PC-3 (cell line): ENCODE measurements at regions of chr3 and their contacts with region 1.

Region 1: DNA sequence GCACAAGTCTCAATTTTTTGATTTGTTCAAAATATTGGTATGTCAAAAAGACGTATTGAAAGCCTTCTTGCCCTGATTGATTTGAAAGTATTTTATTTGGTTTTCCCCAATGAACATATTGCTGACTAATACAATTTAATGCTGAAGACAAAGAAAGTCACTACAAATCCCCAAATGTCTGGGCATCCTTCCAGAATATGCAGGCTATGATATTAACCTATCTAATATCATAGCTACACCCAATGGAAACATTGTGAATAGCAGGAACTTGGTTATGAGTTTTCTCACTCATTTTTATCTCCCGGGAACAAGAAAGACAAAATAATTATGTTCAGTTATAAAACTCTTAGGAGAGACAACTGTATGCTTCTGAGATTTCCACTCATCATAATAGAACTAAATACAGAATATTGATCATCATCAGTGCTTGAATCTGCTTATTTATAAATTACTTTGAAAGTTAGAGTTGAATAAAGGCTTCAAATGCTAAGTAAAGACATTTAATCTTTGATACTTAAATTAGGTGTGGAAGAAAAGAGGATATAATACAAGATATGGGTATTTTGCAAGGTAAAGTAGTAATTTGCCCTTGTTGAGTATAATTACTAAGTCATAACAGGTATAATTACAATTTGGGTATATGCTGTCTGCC is 483.9 kb downstream of the RBMS3 start:
- DNase-seq: peak; percentile 94
- ATAC-seq: peak; percentile 70
- H3K4me3 ChIP-seq: no peak overlapping the region
- H3K27ac ChIP-seq: no peak overlapping the region
- H3K4me1 ChIP-seq: peaks cover 9% of the 10 kb centered on the region; the same call in 1 of the 2 replicates
- H3K27me3 ChIP-seq: no peaks in the 10 kb centered on the region
- CTCF ChIP-seq: peak; percentile 93

Region 2: GRCh38 chr3:28667646-28668621 is 1096.8 kb before region 1 on chr3:
- CTCF ChIA-PET with region 1: no interaction called
- POLR2A ChIA-PET with region 1: no interaction called
- intact Hi-C with region 1: loop called (anchors 5 kb)
- DNase-seq: peak; percentile 83
- ATAC-seq: peak; percentile 98
- H3K4me3 ChIP-seq: no peak overlapping the region
- H3K27ac ChIP-seq: no peak overlapping the region
- H3K4me1 ChIP-seq: no peaks in the 10 kb centered on the region
- H3K27me3 ChIP-seq: peaks cover 48% of the 10 kb centered on the region
- CTCF ChIP-seq: peak; percentile 93

Region 3: GRCh38 chr3:28916713-28917499 is 847.8 kb before region 1 on chr3:
- CTCF ChIA-PET with region 1: no interaction called
- POLR2A ChIA-PET with region 1: no interaction called
- intact Hi-C with region 1: loop called (anchors 1 kb)
- DNase-seq: peak; percentile 47
- ATAC-seq: peak; percentile 75
- H3K4me3 ChIP-seq: no peak overlapping the region
- H3K27ac ChIP-seq: no peak overlapping the region
- H3K4me1 ChIP-seq: 0 out of 2 replicates have a peak, but pooled peaks cover 4% of the 10 kb centered on the region
- H3K27me3 ChIP-seq: no peaks in the 10 kb centered on the region
- CTCF ChIP-seq: peak; percentile 29; the same call in 1 of the 2 replicates

Region 4: GRCh38 chr3:29186982-29187725 is 577.6 kb before region 1 on chr3:
- CTCF ChIA-PET with region 1: no interaction called
- POLR2A ChIA-PET with region 1: no interaction called
- intact Hi-C with region 1: loop called (anchors 1 kb)
- DNase-seq: peak; percentile 99
- ATAC-seq: peak; percentile 79
- H3K4me3 ChIP-seq: no peak overlapping the region; the same call in 1 of the 2 replicates
- H3K27ac ChIP-seq: peak overlapping the region; percentile 98
- H3K4me1 ChIP-seq: peaks cover 45% of the 10 kb centered on the region
- H3K27me3 ChIP-seq: no peaks in the 10 kb centered on the region
- CTCF ChIP-seq: no peak

Region 5: DNA sequence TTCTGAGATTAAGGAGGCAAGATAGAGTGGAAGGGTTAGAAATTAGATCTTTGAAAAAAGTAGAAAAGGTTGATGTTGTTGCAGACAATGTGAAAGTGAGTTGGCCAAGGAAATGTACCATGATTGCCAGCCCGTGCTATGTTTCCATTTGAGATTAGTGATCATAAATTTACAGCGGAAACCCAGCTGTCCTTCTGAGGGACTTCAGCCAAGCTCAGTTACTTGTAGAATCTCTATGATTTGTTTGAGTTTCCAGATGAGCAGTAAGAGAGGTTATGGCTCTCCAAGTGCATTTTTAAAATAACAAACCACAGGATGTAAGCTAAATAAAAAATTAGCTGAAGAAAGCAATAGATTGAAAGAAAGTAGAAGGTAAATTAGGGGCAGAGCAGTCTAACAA is 538.0 kb before region 1 on chr3:
- CTCF ChIA-PET with region 1: no interaction called
- POLR2A ChIA-PET with region 1: no interaction called
- intact Hi-C with region 1: no loop called
- DNase-seq: no peak
- ATAC-seq: no peak
- H3K4me3 ChIP-seq: no peak overlapping the region
- H3K27ac ChIP-seq: no peak overlapping the region
- H3K4me1 ChIP-seq: no peaks in the 10 kb centered on the region
- H3K27me3 ChIP-seq: no peaks in the 10 kb centered on the region
- CTCF ChIP-seq: no peak

Region 6: DNA sequence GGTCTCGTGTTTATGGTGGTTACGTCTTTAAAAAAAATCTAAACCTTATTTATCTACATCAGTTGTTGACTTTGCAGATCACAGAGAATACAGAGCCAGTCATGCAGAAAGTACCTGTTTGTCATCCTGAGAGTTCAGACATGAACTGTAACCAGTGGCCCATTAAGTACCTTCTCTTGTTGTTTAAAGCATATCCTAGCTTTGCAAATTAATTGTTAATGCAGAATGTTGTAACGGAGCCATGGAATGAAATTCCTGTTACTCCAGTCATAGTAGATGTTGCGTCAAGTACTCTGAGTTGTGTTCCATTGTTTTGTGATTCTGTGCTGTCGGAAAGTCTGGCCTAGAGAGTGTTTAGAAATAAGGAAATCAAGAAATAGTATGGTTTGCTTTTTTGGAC is 278.6 kb before region 1 on chr3:
- CTCF ChIA-PET with region 1: no interaction called
- POLR2A ChIA-PET with region 1: no interaction called
- intact Hi-C with region 1: loop called (anchors 2 kb)
- DNase-seq: peak; percentile 88
- ATAC-seq: peak; percentile 93
- H3K4me3 ChIP-seq: peak overlapping the region; percentile 34; the same call in 1 of the 2 replicates
- H3K27ac ChIP-seq: peak overlapping the region; percentile 92
- H3K4me1 ChIP-seq: peaks cover 33% of the 10 kb centered on the region
- H3K27me3 ChIP-seq: no peaks in the 10 kb centered on the region
- CTCF ChIP-seq: no peak

Region 7: DNA sequence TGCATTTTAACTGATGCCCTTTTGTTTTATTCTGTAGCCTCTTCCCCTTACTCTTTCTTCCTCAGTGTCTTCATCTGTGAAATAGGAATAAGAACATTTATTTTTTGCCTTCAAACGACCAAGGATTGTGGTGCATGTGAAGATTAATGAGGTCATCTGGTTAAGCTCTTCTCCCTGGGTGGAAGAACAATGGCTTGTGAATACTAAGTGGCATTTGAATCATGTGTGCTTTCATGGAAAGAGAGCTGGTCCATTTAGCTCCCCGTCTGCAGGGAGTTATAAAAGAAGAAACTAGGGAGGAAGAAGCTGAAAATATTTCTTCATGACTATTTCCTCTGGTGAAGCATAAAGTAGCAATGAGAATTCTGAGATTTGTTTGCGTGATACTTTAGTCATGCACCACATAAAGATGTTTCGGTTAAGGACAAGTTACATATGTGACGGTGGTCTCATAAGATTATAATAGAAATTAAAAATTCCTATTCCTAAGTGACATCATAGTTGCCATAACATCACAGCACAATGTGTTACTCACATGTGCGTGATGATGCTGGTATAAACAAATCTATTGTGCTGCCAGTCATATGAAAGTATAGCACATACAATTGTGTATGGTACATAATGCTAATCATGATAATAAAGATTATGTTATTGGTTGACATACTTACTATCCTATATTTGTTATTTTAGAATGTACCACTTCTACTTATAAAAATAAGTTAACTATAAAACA is 109.5 kb before region 1 on chr3:
- CTCF ChIA-PET with region 1: no interaction called
- POLR2A ChIA-PET with region 1: no interaction called
- intact Hi-C with region 1: no loop called
- DNase-seq: no peak
- ATAC-seq: no peak
- H3K4me3 ChIP-seq: no peak overlapping the region
- H3K27ac ChIP-seq: no peak overlapping the region
- H3K4me1 ChIP-seq: 0 out of 2 replicates have a peak, but pooled peaks cover 1% of the 10 kb centered on the region
- H3K27me3 ChIP-seq: no peaks in the 10 kb centered on the region
- CTCF ChIP-seq: no peak

Region 8: GRCh38 chr3:29693863-29694262 is 70.9 kb before region 1 on chr3:
- CTCF ChIA-PET with region 1: no interaction called
- POLR2A ChIA-PET with region 1: no interaction called
- intact Hi-C with region 1: loop called (anchors 2 kb)
- DNase-seq: peak; percentile 91
- ATAC-seq: peak; percentile 77
- H3K4me3 ChIP-seq: peak overlapping the region; percentile 13; the same call in 1 of the 2 replicates
- H3K27ac ChIP-seq: peak overlapping the region; percentile 53
- H3K4me1 ChIP-seq: peaks cover 38% of the 10 kb centered on the region
- H3K27me3 ChIP-seq: no peaks in the 10 kb centered on the region
- CTCF ChIP-seq: no peak

Region 9: DNA sequence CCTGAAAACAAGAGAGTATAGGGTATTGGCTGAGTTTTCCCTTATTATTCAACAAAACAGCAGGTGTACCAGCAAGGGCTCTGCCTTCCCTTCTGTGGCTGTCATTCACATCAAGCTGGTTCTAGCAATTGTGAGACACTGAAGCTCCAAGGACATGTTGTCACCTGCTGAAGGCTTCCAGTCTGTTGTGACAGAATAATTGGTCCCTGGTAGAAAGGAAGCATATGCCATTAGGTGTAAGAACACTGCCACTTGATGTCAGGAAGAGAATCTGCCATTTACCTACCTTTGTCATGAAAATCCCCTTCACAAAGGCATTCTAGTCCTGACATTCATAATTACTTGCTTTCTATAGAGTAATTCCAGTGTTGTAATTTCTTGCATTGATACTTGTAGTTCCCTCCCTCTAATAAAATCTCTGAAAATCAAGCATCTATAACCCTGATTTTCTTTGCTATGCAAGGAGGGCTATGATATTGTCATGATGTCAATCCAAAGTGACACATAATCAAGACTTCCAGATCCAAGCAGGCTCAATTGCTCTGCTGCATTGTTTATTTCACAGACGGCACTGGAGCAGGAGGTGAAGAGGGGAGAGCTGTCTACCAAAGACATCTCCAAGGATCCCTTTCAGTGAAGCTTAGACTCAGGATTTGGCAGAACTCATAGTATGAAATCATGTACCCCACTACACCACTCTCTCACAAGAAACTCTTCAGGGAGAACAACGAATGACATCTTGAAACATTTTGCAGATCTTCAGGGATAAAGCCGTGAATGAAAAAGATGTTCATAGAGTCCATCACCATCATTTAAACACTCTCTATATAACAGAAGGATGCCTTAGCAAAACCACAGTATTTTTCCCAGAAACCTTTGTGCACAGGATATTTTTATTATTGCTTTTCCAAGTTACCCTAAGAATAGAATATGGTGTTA is 58.6 kb before region 1 on chr3:
- CTCF ChIA-PET with region 1: no interaction called
- POLR2A ChIA-PET with region 1: no interaction called
- intact Hi-C with region 1: no loop called
- DNase-seq: no peak
- ATAC-seq: no peak
- H3K4me3 ChIP-seq: no peak overlapping the region
- H3K27ac ChIP-seq: no peak overlapping the region
- H3K4me1 ChIP-seq: no peaks in the 10 kb centered on the region
- H3K27me3 ChIP-seq: no peaks in the 10 kb centered on the region
- CTCF ChIP-seq: no peak

Region 10: DNA sequence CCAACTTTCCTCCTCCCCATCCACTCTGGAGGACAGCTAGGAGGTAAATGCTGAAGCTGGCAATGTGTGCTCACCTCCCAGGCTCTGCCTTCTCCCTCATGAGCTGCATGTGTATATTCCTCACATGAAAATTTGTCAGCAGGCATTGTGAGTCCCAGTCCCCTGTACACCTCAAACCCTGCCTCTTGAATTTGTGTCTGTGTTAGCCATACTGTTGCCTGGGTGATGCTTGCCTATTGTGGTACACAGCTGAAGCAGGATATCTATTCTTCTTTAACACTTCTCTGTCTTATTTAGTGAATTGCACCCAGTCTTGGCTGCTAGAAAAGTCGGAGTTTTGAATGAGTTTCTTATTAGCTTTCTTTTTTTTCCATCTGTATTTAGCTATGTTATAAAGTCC is 255.7 kb after region 1 on chr3:
- CTCF ChIA-PET with region 1: no interaction called
- POLR2A ChIA-PET with region 1: no interaction called
- intact Hi-C with region 1: no loop called
- DNase-seq: no peak
- ATAC-seq: no peak
- H3K4me3 ChIP-seq: no peak overlapping the region
- H3K27ac ChIP-seq: no peak overlapping the region
- H3K4me1 ChIP-seq: no peaks in the 10 kb centered on the region
- H3K27me3 ChIP-seq: no peaks in the 10 kb centered on the region
- CTCF ChIP-seq: no peak